Gastrocnemius medialis (tissue), 4 donors: ENCODE measurements at regions of chr1 and their contacts with region 1.

Region 1: DNA sequence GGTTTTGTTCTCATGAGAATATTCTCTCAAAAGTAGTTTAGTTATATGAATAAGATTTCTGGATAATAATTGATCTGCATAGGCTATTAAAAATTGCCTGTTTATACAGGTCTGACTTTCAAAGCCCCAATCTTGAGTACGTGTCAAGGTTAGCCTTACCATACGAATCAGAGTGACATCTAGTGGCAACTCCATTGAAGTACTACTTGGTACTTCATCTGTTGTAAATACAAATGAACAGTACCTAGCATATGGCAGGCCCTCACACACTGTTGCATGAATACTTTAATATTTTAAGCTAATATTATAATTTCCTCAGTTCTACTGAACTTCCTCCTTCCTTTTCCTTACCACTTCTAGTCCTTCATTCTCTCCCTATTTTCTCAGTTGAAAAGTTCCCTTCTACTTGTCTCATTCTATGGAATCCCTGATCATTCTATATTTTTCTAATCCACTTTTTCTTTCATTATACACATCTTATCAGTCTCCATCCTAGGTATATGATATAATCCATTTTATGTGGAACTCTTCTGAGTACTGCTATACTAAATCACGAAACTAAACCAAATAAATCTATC is 101.2 kb downstream of the AKT3 start:
- DNase-seq: no peak
- ATAC-seq: peak; percentile 74 to 97
- H3K4me3 ChIP-seq: no peak overlapping the region
- H3K27ac ChIP-seq: no peak overlapping the region
- H3K4me1 ChIP-seq: peaks cover 0 to 4% of the 10 kb centered on the region in 2 donors
- H3K27me3 ChIP-seq: no peaks in the 10 kb centered on the region
- CTCF ChIP-seq: peak; percentile 43 to 84 (median 60)
- POLR2A ChIP-seq: no peak

Region 2: GRCh38 chr1:243343970-243344937 is 404.5 kb before region 1 on chr1:
- in situ Hi-C with region 1: loop called (anchors 10 to 25 kb)
- intact Hi-C with region 1: loop called (anchors 5 kb)
- DNase-seq: no peak
- ATAC-seq: peak; percentile 52 to 71
- H3K4me3 ChIP-seq: no peak overlapping the region
- H3K27ac ChIP-seq: no peak overlapping the region
- H3K4me1 ChIP-seq: no peaks in the 10 kb centered on the region
- H3K27me3 ChIP-seq: no peaks in the 10 kb centered on the region
- CTCF ChIP-seq: peak; percentile 54 to 81 (median 68)
- POLR2A ChIP-seq: no peak

Region 3: DNA sequence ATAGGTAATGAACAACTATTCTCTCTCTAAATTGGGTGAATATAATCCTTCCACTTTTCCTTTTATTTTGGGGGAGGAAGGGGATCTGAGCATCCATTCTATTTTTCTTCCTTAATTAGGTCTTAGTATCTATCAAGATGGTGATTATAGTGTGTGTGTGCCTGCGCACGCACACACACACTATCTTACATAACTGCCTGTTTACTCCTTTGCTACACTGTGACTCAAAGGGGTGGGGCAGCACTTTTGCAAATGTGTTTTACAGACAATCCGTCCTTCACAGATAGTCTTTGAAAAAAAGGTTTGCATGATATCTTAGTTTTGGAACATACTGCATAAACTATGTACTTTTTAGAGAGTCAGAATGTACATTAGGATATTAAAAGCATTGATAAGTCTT is 301.4 kb before region 1 on chr1:
- in situ Hi-C with region 1: no loop called
- intact Hi-C with region 1: no loop called
- DNase-seq: peak in 1 of 2 donors; percentile 29
- ATAC-seq: peak; percentile 69 to 70
- H3K4me3 ChIP-seq: no peak overlapping the region
- H3K27ac ChIP-seq: no peak overlapping the region
- H3K4me1 ChIP-seq: peaks cover 3 to 25% of the 10 kb centered on the region in 2 donors
- H3K27me3 ChIP-seq: no peaks in the 10 kb centered on the region
- CTCF ChIP-seq: no peak
- POLR2A ChIP-seq: no peak

Region 4: DNA sequence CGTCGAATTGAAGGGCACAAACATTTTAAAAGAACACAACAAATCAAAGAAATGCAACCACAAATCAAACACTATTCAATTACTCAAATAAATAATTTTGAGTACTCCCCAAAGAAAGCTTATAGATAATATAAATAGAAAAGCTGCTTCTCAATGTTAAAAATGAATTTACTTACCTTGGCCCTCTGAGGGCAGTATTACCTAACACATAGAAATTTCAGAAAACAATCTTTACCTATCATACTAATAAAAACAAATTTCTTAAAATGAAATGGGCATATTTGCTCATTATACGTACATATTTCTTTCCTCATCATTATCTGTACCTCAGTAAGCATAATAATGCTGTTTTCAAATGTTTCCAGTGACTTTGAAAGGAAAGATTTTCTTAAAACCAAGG is 40.6 kb before region 1 on chr1:
- in situ Hi-C with region 1: no loop called
- intact Hi-C with region 1: loop called (anchors 5 kb)
- DNase-seq: no peak
- ATAC-seq: no peak
- H3K4me3 ChIP-seq: no peak overlapping the region
- H3K27ac ChIP-seq: no peak overlapping the region
- H3K4me1 ChIP-seq: peaks cover 13 to 21% of the 10 kb centered on the region in 2 donors
- H3K27me3 ChIP-seq: no peaks in the 10 kb centered on the region
- CTCF ChIP-seq: no peak
- POLR2A ChIP-seq: no peak

Region 5: GRCh38 chr1:244296447-244296846 is 547.7 kb after region 1 on chr1:
- in situ Hi-C with region 1: loop called in 1 of 4 experiments (anchors 25 kb)
- intact Hi-C with region 1: no loop called
- DNase-seq: no peak
- ATAC-seq: no peak
- H3K4me3 ChIP-seq: no peak overlapping the region
- H3K27ac ChIP-seq: no peak overlapping the region
- H3K4me1 ChIP-seq: no peaks in the 10 kb centered on the region
- H3K27me3 ChIP-seq: no peaks in the 10 kb centered on the region
- CTCF ChIP-seq: no peak
- POLR2A ChIP-seq: no peak